Right ventricle myocardium inferior (tissue), 1 donor: ENCODE measurements at regions of chr1 and their contacts with region 1.

Region 1: DNA sequence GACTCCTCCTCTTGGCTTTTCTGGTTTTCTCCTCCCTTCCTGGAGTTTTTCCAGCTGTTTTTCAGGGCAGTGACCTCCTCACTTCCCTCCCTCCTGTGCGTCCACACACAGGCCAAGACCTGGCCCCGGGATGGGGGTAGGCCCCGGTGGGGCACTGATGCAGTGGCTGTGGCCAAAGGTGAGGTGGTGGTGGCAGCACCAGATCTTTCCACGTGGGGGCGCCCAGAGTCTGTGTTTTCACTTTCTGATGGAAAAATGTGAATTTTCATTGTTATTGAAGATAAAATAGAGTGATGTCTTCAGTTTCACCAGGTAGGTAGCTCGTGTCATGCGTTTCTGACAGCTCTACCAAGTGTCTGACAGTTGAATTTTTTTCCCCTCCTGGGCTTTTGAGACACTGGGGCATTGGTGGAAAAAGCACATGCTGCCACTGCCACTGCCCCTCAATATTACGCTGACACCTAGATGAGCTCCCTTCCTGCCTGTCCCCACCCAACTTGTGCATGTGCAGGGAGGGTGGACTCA is 39.9 kb upstream of the MAGOH start:
- DNase-seq: no peak
- ATAC-seq: no peak

Region 2: DNA sequence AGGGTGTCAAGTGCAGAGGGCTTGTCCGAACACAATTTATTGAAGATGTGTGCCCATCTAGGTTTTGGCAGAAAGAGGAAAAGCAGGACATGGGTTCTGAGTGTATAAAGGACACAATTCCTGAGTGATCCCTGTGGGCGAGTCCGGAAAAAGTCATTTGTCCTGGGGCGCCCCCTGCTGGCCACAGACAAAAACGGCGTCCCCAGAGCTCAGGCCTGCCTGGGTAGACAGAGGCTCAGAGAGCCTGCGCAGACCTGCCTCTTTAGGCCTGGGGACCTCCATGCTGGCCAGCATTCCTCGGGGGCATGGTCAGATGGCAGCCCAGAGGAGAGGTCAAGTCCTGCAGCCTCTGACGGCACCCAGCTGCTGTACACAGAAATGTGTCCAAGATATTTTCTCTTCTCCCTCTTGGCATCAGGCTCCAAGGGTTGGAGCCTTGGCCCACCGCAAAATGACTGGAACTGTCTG is 115.1 kb after region 1 on chr1:
- intact Hi-C with region 1: loop called (anchors 1 kb)
- DNase-seq: peak; percentile 84
- ATAC-seq: peak; percentile 77